Ovary (tissue), 10 donors: ENCODE measurements at regions of chr4 and their contacts with region 1.

Region 1: GRCh38 chr4:3346146-3346545 is 53.3 kb downstream of the RGS12 start:
- DNase-seq: peak in 2 of 5 donors; percentile 55 to 76
- H3K4me3 ChIP-seq: no peak overlapping the region
- H3K27ac ChIP-seq: no peak overlapping the region
- H3K4me1 ChIP-seq: peaks cover 7% of the 10 kb centered on the region
- H3K27me3 ChIP-seq: no peaks in the 10 kb centered on the region
- CTCF ChIP-seq: peak; percentile 80 to 89 (median 86)
- EP300 ChIP-seq: no peak
- POLR2A ChIP-seq: no peak

Region 2: DNA sequence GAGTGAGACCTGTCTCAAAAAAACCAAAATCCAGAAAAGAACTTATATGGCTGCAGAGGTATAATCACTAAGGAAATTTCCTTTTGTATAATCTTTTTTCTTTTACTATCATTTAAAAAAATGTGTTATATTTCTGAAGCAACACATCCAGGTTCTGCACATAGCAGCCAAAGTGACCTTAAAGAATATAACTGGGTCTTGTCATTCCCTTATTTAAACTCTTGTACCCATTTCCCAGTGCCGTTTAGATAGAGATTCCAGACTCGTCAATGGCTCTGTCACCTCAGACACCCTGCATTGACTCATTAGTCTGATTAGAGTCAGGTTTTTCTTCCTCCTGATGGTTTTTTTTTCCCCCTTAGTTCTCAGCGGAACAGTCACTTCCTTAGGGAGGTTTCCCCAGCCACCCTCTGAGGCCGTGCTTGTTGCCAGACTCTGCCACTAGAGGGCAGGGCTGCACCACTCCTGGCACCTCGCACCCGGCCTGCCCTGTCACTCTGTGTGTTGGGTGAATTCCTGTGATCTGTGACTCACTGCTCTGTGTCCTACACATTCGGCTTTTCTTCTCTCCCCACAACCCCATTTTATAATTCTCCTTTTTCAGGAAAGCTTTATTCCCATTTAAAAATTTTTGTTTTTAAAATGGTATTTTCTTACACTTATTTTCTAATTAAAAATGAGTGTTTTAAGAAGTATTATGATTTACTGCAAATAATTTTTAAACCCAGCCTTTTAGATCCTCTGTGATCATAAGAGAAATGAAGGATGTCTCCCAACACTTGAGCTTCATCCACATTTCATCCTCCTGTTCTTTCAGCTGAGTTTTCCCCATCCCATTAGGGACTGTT is 239.6 kb before region 1 on chr4:
- intact Hi-C with region 1: loop called in 1 of 4 experiments (anchors 5 kb)
- DNase-seq: peak; percentile 79 to 89 (median 88)
- H3K4me3 ChIP-seq: no peak overlapping the region
- H3K27ac ChIP-seq: no peak overlapping the region
- H3K4me1 ChIP-seq: peaks cover 13% of the 10 kb centered on the region
- H3K27me3 ChIP-seq: no peaks in the 10 kb centered on the region
- CTCF ChIP-seq: peak; percentile 84 to 89 (median 84)
- EP300 ChIP-seq: no peak
- POLR2A ChIP-seq: no peak

Region 3: GRCh38 chr4:3193531-3194203 is 152.5 kb before region 1 on chr4:
- intact Hi-C with region 1: no loop called
- DNase-seq: no peak
- H3K4me3 ChIP-seq: no peak overlapping the region
- H3K27ac ChIP-seq: no peak overlapping the region
- H3K4me1 ChIP-seq: peaks cover 3% of the 10 kb centered on the region
- H3K27me3 ChIP-seq: no peaks in the 10 kb centered on the region
- CTCF ChIP-seq: no peak
- EP300 ChIP-seq: no peak
- POLR2A ChIP-seq: no peak

Region 4: GRCh38 chr4:3442959-3443749 is 97.0 kb after region 1 on chr4:
- intact Hi-C with region 1: loop called (anchors 2 to 10 kb)
- DNase-seq: peak in 4 of 5 donors; percentile 54 to 73 (median 64)
- H3K4me3 ChIP-seq: no peak overlapping the region
- H3K27ac ChIP-seq: no peak overlapping the region
- H3K4me1 ChIP-seq: peaks cover 3% of the 10 kb centered on the region
- H3K27me3 ChIP-seq: no peaks in the 10 kb centered on the region
- CTCF ChIP-seq: peak; percentile 93 to 96 (median 95)
- EP300 ChIP-seq: no peak
- POLR2A ChIP-seq: no peak

Region 5: GRCh38 chr4:3449574-3450534 is 103.7 kb after region 1 on chr4:
- intact Hi-C with region 1: loop called in 3 of 4 experiments (anchors 2 to 10 kb)
- DNase-seq: peak in 2 of 5 donors; percentile 11 to 12
- H3K4me3 ChIP-seq: no peak overlapping the region
- H3K27ac ChIP-seq: no peak overlapping the region
- H3K4me1 ChIP-seq: no peaks in the 10 kb centered on the region
- H3K27me3 ChIP-seq: no peaks in the 10 kb centered on the region
- CTCF ChIP-seq: no peak
- EP300 ChIP-seq: no peak
- POLR2A ChIP-seq: no peak